CD14-positive monocyte (primary cell): ENCODE measurements at regions of chr9 and their contacts with region 1.

Region 1: GRCh38 chr9:93962561-93963440 is 7.6 kb upstream of the BARX1 start:
- DNase-seq: peak; percentile 66 to 78 (median 71)
- H3K4me3 ChIP-seq: no peak overlapping the region
- H3K4me3 Mint-ChIP-seq: peak overlapping the region in 1 of 2 donors; percentile 49
- H3K27ac ChIP-seq: no peak overlapping the region
- H3K27ac Mint-ChIP-seq: no peak overlapping the region
- H3K4me1 ChIP-seq: peaks cover 26 to 30% of the 10 kb centered on the region in 2 donors
- H3K4me1 Mint-ChIP-seq: peaks cover 35% of the 10 kb centered on the region
- H3K27me3 ChIP-seq: peaks cover 42 to 55% of the 10 kb centered on the region in 2 donors
- H3K27me3 Mint-ChIP-seq: peaks cover 57 to 73% (median 61%) of the 10 kb centered on the region in 3 donors
- CTCF ChIP-seq: peak; percentile 86

Region 2: DNA sequence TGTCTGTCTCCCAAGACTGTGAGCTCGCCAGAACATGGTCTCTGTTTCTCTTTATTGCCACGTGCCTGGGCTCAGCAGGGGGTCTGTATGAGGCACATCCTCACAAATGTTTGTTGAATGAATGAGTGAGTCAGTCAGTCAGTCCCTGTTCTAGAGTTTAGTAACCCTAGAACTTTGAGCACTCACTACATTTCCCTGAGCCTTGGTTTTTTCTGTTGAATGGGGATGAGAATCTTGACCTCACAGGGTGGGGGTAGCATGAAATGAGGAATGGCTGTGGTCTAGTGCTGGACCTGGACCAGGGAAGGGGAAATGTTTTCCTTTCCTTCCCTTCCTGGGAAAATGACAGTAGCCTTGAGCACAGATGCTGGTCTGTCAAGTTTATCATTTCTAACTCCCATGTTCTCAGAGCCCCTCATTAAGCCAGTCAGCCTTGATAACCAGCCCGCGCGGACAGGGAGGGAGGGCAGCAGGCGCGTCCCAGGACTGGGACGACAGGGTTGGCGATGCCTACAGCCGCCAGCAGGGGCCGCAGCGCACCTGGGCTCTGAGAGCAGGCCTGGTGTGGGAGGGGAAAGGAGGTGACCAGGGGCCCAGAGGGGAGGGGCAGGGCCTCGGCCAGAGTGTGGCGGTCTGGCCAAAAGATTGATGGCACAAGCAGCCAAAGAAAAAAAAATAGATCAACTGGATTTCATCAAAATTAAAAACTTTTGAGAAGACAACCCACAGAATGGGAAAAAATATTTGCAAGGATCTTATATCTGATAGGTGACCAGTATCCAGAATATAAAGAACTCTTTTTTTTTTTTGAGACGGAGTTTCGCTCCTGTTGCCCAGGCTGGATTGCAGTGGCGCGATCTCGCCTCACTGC is 803.0 kb before region 1 on chr9:
- intact Hi-C with region 1: loop called in 1 of 2 experiments (anchors 5 kb)
- DNase-seq: peak; percentile 70 to 82 (median 75)
- H3K4me3 ChIP-seq: no peak overlapping the region
- H3K4me3 Mint-ChIP-seq: no peak overlapping the region
- H3K27ac ChIP-seq: no peak overlapping the region
- H3K27ac Mint-ChIP-seq: peak overlapping the region in 2 of 7 donors; percentile 58 to 65
- H3K4me1 ChIP-seq: peaks cover 6 to 10% of the 10 kb centered on the region in 2 donors
- H3K4me1 Mint-ChIP-seq: peaks cover 10% of the 10 kb centered on the region
- H3K27me3 ChIP-seq: no peaks in the 10 kb centered on the region
- H3K27me3 Mint-ChIP-seq: peaks cover 3 to 13% (median 8%) of the 10 kb centered on the region in 3 donors
- CTCF ChIP-seq: peak; percentile 97

Region 3: GRCh38 chr9:93682232-93682968 is 280.4 kb before region 1 on chr9:
- intact Hi-C with region 1: loop called (anchors 1 to 2 kb)
- DNase-seq: peak in 2 of 3 donors; percentile 7 to 30
- H3K4me3 ChIP-seq: no peak overlapping the region
- H3K4me3 Mint-ChIP-seq: no peak overlapping the region
- H3K27ac ChIP-seq: no peak overlapping the region
- H3K27ac Mint-ChIP-seq: peak overlapping the region in 1 of 7 donors; percentile 59
- H3K4me1 ChIP-seq: no peaks in the 10 kb centered on the region
- H3K4me1 Mint-ChIP-seq: peaks cover 5% of the 10 kb centered on the region
- H3K27me3 ChIP-seq: no peaks in the 10 kb centered on the region
- H3K27me3 Mint-ChIP-seq: peaks cover 5 to 8% (median 5%) of the 10 kb centered on the region in 3 donors
- CTCF ChIP-seq: peak; percentile 75

Region 4: GRCh38 chr9:93827545-93828330 is 135.1 kb before region 1 on chr9:
- intact Hi-C with region 1: loop called (anchors 5 kb)
- DNase-seq: peak; percentile 12 to 34 (median 15)
- H3K4me3 ChIP-seq: no peak overlapping the region
- H3K4me3 Mint-ChIP-seq: peak overlapping the region in 1 of 2 donors; percentile 48
- H3K27ac ChIP-seq: no peak overlapping the region
- H3K27ac Mint-ChIP-seq: no peak overlapping the region
- H3K4me1 ChIP-seq: no peaks in the 10 kb centered on the region
- H3K4me1 Mint-ChIP-seq: peaks cover 3% of the 10 kb centered on the region
- H3K27me3 ChIP-seq: peaks cover 0 to 32% of the 10 kb centered on the region in 2 donors
- H3K27me3 Mint-ChIP-seq: peaks cover 22 to 50% (median 39%) of the 10 kb centered on the region in 3 donors
- CTCF ChIP-seq: peak; percentile 86

Region 5: DNA sequence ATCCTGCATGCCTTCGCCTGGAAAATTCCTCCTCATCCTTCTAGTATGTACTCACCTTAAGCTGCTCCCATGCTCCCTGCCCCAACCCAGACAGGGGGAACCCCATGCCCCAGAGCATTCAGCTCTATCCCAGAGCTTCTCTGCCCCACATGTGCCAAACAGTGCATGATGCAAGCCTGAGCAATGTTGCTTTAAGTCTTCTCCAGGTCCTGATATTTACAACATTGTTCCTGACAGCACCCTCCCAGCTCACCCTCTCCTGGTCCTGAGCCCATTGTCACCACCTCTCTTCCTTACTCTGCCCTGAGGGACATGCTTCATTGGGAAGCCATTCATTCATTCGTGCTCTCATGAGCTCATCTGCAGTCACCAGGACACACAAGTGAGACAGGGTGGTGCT is 15.8 kb after region 1 on chr9:
- intact Hi-C with region 1: no loop called
- DNase-seq: no peak
- H3K4me3 ChIP-seq: no peak overlapping the region
- H3K4me3 Mint-ChIP-seq: no peak overlapping the region
- H3K27ac ChIP-seq: no peak overlapping the region
- H3K27ac Mint-ChIP-seq: no peak overlapping the region
- H3K4me1 ChIP-seq: no peaks in the 10 kb centered on the region
- H3K4me1 Mint-ChIP-seq: no peaks in the 10 kb centered on the region
- H3K27me3 ChIP-seq: no peaks in the 10 kb centered on the region
- H3K27me3 Mint-ChIP-seq: peaks cover 9 to 27% (median 9%) of the 10 kb centered on the region in 3 donors
- CTCF ChIP-seq: no peak